ENCODE measurements at regions of chr7 and their contacts with region 1.

Region 1: DNA sequence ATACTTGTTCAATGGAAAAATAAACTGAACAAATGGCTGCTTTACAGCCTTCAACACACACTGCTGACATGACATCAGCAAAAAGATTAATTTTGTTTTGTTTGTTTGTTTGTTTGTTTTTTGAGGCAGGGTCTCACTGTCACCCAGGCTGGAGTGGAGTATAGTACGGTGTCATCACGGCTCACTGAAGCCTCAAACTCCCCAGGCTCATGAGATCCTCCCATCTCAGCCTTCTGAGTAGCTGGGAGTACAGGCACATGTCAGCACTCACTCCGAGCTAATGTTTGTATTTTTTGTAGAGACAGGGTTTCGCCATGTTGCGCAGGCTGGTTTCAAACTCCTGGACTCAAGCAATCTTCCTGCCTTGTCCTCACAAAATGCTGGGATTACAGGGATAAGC is 10.9 kb downstream of the TARP start:
- DNase-seq: no peak
- ATAC-seq: peak in 1 of 3 donors; percentile 12
- H3K4me3 ChIP-seq: no peak overlapping the region
- H3K4me3 Mint-ChIP-seq: peak overlapping the region; percentile 80
- H3K27ac ChIP-seq: peak overlapping the region; percentile 83
- H3K27ac Mint-ChIP-seq: peak overlapping the region; percentile 88 to 100
- H3K4me1 ChIP-seq: peaks cover 39% of the 10 kb centered on the region
- H3K4me1 Mint-ChIP-seq: peaks cover 83 to 90% of the 10 kb centered on the region in 2 donors
- H3K27me3 ChIP-seq: no peaks in the 10 kb centered on the region
- H3K27me3 Mint-ChIP-seq: no peaks in the 10 kb centered on the region
- CTCF ChIP-seq: no peak

Region 2: DNA sequence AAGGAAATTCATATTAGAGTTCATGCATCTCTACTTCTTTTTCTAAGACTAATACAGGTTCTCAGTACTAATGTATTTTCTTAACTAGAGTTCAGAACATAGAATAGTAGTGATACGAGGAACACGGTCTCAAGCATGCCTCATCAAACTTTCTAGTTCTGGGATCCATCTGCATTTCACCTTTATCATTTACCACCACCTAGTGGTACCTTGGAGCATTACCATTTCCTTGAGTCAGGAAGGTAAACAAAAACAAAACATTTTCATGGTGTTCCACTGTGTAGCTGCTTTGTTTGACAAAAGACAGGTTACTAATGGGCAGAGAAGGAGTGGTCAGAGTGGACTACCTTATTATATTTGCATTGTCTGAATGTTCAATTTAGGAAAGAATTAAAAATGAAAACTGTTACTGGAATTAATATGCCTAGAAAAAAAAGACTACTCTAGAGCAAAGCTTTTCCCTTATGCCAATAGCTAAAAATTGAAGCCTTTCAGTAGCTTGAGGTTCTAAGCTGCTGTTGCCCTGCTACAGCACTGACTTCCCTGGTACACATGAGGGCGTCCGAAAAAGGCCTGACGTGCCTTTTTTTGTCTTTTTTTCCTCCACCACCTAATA is 40.0 kb before region 1 on chr7:
- intact Hi-C with region 1: loop called (anchors 5 kb)
- DNase-seq: peak in 1 of 2 donors; percentile 86
- ATAC-seq: peak; percentile 44 to 54 (median 46)
- H3K4me3 ChIP-seq: no peak overlapping the region
- H3K4me3 Mint-ChIP-seq: peak overlapping the region; percentile 74
- H3K27ac ChIP-seq: peak overlapping the region; percentile 76
- H3K27ac Mint-ChIP-seq: peak overlapping the region; percentile 95 to 96
- H3K4me1 ChIP-seq: peaks cover 63% of the 10 kb centered on the region
- H3K4me1 Mint-ChIP-seq: peaks cover 95 to 97% of the 10 kb centered on the region in 2 donors
- H3K27me3 ChIP-seq: no peaks in the 10 kb centered on the region
- H3K27me3 Mint-ChIP-seq: no peaks in the 10 kb centered on the region
- CTCF ChIP-seq: peak; percentile 91

Region 3: GRCh38 chr7:38245409-38245977 is 17.1 kb before region 1 on chr7:
- intact Hi-C with region 1: no loop called
- DNase-seq: peak in 1 of 2 donors; percentile 68
- ATAC-seq: peak; percentile 75 to 80 (median 77)
- H3K4me3 ChIP-seq: no peak overlapping the region
- H3K4me3 Mint-ChIP-seq: peak overlapping the region; percentile 17
- H3K27ac ChIP-seq: peak overlapping the region; percentile 68
- H3K27ac Mint-ChIP-seq: peak overlapping the region; percentile 93
- H3K4me1 ChIP-seq: peaks cover 25% of the 10 kb centered on the region
- H3K4me1 Mint-ChIP-seq: peaks cover 77 to 83% of the 10 kb centered on the region in 2 donors
- H3K27me3 ChIP-seq: no peaks in the 10 kb centered on the region
- H3K27me3 Mint-ChIP-seq: no peaks in the 10 kb centered on the region
- CTCF ChIP-seq: no peak

Region 4: GRCh38 chr7:38283809-38284208 is 21.3 kb after region 1 on chr7:
- intact Hi-C with region 1: loop called (anchors 2 kb)
- DNase-seq: no peak
- ATAC-seq: no peak
- H3K4me3 ChIP-seq: no peak overlapping the region
- H3K4me3 Mint-ChIP-seq: peak overlapping the region; percentile 77
- H3K27ac ChIP-seq: peak overlapping the region; percentile 55
- H3K27ac Mint-ChIP-seq: peak overlapping the region; percentile 96 to 100
- H3K4me1 ChIP-seq: peaks cover 46% of the 10 kb centered on the region
- H3K4me1 Mint-ChIP-seq: peaks cover 64% of the 10 kb centered on the region in 2 donors
- H3K27me3 ChIP-seq: no peaks in the 10 kb centered on the region
- H3K27me3 Mint-ChIP-seq: no peaks in the 10 kb centered on the region
- CTCF ChIP-seq: no peak

Measured in natural killer cell (primary cell).